Naive thymus-derived CD8-positive, alpha-beta T cell (primary cell): ENCODE measurements at regions of chr3 and their contacts with region 1.

Region 1: DNA sequence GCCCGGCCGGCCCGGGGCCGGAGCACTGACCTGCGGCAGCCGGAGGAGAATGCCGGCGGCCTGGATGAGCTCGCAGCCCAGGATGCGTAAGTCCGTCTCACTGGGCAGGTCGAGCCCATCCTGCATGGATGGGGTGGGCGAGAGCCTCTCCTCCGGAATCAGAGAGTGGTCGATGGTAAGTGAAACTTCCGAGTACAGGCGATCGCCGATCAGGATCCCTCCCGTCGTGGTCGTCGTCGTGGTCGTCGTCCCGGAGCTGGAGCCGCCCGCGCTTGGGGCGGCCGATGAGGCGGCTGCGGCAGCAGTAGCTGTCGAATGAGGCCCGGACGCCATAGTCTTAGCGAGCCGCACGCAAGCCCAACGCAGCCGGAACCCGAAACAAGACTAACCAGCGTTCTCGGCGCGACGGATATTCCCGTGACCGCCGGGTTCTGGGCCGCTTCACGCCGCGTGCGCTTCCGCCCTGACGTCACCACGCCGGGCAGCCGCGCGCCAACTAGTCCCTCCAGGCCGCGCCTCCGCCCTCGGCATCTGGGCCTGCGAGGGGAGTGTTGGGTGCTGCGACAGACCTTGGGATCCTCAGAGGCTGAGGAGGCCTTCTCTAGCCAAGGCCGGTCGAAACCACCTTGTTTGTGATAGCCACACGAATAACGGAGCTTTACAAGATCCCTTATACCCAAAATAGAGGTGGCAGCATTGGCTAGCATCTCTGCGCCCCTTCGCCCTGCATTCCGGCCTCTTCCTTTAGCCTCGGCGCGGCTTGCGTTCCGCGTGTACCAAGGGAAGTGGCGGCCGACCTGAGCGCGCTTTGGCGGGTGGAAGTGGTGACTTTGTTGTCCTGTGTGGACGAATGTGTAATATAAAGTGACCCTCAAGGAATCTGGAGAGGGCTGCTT is at the start of gene CCNL1:
- DNase-seq: peak; percentile 91 to 98 (median 96)
- ATAC-seq: peak; percentile 73 to 75
- H3K4me3 Mint-ChIP-seq: peak within 1 kb of the TSS; percentile 85 to 99 (median 96)
- H3K27ac Mint-ChIP-seq: peak within 1 kb of the TSS; percentile 99 to 100 (median 99)
- H3K4me1 Mint-ChIP-seq: peaks cover 27 to 66% (median 57%) of the 10 kb centered on the region in 4 donors
- H3K27me3 Mint-ChIP-seq: no peaks in the 10 kb centered on the region
- polyA plus RNA-seq, gene CCNL1: 52.9 to 57.0 (median 54.9) TPM

Region 2: DNA sequence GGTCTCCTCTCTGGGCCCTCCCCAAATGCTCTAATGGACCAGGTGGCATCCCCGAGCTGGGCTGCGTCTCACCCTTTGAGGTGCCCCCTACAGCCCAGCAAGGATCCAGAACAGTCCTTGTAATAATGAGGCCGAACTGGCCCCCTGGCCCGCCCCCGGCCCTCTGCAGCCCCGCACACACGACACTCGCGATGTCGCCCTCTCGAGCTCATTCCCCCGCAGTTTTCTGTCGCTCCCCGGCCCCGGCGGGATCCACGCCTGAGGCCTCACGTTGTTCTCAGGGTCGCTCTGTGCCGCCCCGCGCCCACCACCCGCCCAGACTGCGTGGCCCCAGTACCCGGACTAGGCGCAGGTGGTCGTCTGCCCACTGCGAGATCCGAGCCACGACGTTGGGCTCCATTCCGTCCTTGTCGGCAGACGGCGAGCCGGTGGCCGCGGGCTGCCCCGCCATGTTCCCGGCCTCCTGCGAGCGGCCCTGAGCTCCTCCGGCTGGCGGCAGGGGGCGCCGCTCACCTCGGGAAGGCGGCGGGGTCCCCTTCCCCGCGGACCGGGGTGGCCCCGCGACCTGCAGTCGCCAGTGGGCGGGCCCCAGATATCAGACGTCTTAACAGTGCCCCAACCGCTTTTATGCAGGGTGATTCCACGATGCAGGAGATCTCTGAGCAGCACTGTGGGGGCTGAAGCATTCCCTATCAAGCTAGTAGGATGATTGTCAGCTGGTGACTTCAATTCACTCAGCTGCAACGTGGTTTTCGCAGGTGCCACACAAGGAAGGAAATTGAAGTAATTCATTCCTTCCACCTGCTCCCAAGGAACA is 1354.0 kb before region 1 on chr3 and contains the start of gene C3orf33:
- POLR2A ChIA-PET with region 1: interaction called, 10 read pairs
- DNase-seq: peak; percentile 64 to 84 (median 78)
- ATAC-seq: peak; percentile 96 to 97
- H3K4me3 Mint-ChIP-seq: peak within 1 kb of the TSS; percentile 84 to 95 (median 90)
- H3K27ac Mint-ChIP-seq: peak within 1 kb of the TSS; percentile 27 to 93 (median 91)
- H3K4me1 Mint-ChIP-seq: peaks cover 7 to 26% (median 18%) of the 10 kb centered on the region in 4 donors
- H3K27me3 Mint-ChIP-seq: peaks cover 7 to 11% (median 8%) of the 10 kb centered on the region in 5 donors
- polyA plus RNA-seq, gene C3orf33: 3.2 to 5.6 (median 4.4) TPM

Region 3: DNA sequence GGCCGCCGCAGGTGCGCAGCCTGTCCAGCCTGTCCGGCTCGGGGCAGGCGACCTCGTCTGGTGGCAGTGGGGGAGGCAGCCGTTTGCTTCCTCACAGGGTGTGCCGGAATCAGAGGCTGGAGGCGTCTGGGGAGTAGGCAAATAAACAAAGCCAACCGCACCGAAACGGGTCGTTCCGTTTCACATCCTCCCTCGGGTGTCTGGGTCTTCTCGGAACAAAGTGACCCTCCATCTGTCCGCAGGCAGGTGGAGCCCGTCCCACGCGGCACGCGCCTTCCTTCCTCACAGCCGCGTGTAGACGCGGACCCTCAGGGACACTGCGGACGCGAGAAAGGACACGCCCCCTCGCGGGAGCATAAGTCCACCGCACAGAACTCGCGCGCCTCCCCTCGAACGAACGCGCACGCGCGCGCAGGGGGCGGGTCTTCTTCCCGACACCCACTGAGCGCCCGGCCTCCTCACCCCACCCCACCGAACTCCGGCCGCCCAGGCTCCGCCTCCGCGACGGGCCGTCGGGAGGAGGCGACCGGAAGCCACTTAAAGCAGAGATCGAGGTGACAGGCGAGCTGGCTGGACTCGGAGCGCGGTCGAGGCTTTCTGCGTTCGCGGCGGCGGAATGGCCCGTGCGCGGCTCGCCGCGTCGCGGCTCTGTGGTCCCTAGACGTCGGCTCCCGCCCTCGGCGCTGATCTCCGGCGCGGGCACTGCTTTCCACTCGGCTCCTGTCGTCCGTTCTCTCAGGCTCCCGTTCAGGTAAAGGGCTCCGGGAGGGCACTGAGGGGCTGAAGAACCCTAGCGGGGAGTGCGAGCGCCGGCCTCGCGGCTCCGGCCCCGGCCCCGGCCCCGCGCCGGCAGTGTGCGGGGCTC is 485.7 kb before region 1 on chr3 and contains the start of gene TIPARP:
- POLR2A ChIA-PET with region 1: interaction called, 25 read pairs
- DNase-seq: peak; percentile 97 to 99 (median 99)
- ATAC-seq: peak; percentile 76 to 80
- H3K4me3 Mint-ChIP-seq: peak within 1 kb of the TSS; percentile 89 to 99 (median 97)
- H3K27ac Mint-ChIP-seq: peak within 1 kb of the TSS; percentile 92 to 99 (median 99)
- H3K4me1 Mint-ChIP-seq: peaks cover 22 to 47% (median 41%) of the 10 kb centered on the region in 4 donors
- H3K27me3 Mint-ChIP-seq: no peaks in the 10 kb centered on the region
- polyA plus RNA-seq, gene TIPARP: 4.2 to 20.9 (median 7.0) TPM

Region 4: DNA sequence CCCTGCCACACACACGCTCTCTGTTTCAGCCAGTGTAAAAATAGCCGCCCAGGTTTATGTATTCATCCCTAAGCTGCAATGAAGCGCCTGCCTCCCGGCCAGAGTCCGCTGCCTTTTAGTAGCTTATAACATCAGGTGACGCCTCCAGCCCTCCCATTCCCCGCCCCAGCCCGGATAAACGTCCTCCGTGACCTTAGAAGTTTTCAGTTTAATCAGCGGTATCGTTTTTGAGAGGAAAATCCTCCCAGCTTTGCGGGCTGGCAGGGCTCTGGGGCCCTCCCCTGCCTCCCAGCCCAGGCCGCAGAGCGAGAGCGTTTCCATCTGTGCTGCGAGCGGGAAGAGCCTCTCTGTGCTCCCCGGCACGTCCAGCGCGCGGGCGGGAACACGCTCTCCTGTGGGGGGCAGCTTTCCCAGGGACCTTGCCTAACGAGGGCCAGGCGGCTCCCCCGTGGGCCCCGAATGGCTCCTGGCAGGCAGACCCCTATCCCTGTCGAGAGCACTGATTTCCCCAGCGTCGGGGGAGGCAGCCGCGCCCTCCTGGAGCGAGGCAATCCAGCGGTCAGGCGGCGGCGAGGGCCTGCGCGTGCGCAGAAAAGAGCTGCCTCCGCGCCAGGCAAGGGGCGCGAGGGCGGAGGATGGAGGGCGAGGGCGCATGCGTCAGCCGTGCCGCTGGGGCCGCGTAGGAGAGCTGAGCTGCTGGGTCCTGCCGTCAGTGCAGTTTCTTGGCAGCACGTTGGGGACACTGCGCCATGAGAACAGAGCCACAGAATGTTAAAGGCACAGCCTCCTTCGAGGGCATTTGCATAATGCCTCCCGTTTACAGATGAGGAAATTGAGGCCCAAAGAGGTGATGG is 71.2 kb before region 1 on chr3:
- POLR2A ChIA-PET with region 1: interaction called, 40 read pairs
- DNase-seq: peak; percentile 85 to 96 (median 94)
- ATAC-seq: peak; percentile 91 to 96
- H3K4me3 Mint-ChIP-seq: peak overlapping the region; percentile 82 to 92 (median 87)
- H3K27ac Mint-ChIP-seq: peak overlapping the region; percentile 90 to 99 (median 96)
- H3K4me1 Mint-ChIP-seq: peaks cover 18 to 32% (median 20%) of the 10 kb centered on the region in 4 donors
- H3K27me3 Mint-ChIP-seq: peaks cover 0 to 2% (median 0%) of the 10 kb centered on the region in 5 donors

Region 5: GRCh38 chr3:157136647-157137387 is 23.2 kb before region 1 on chr3:
- POLR2A ChIA-PET with region 1: interaction called, 30 read pairs
- DNase-seq: no peak
- ATAC-seq: peak in 1 of 2 donors; percentile 39
- H3K4me3 Mint-ChIP-seq: no peak overlapping the region
- H3K27ac Mint-ChIP-seq: peak overlapping the region in 9 of 10 donors; percentile 13 to 86 (median 76)
- H3K4me1 Mint-ChIP-seq: peaks cover 6 to 35% (median 25%) of the 10 kb centered on the region in 4 donors
- H3K27me3 Mint-ChIP-seq: no peaks in the 10 kb centered on the region

Region 6: DNA sequence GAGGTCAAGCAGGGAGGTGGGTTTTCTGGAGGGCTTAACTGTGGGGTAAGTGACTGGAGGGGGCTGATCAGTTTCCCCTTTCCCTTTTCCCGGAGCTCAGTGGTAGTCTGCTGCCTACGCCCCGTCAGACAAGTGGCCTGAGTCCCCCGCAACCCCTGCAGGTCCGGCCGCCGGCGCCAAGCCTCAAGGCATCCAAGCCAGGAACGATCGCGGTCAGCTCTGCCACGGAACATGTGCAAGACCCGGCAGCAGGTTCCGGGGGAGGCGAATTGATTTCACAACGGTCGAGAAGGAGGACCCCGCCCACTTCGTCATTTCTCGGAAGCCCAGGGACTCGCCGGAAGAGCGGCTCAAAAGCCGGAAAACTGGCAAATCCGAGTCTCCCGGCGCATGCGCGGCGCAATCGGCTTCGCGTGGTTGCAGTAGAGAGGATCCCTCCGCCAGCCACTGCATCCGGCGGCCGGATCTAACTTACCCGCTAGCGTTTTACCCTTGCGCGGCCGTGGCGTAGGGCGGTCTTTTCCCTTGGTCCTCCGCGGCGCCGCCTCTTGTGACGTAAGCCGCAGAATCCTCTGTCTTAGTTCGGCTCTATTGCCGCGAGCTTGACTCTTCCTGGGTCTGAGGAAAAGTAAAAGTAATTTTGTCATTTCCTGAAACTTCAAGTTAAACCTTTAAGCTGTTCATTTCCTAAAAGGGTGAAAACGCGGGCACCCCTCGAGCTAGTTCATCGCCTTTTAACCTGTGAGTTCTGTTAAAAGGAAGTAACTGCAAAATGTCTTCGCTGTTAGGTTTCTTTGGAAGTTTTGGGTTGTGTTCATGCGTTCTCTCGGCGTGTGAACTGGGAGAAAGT is 14.9 kb after region 1 on chr3:
- POLR2A ChIA-PET with region 1: interaction called, 503 read pairs
- DNase-seq: peak; percentile 91 to 99 (median 98)
- ATAC-seq: peak; percentile 91 to 93
- H3K4me3 Mint-ChIP-seq: peak overlapping the region; percentile 81 to 98 (median 94)
- H3K27ac Mint-ChIP-seq: peak overlapping the region; percentile 95 to 99 (median 98)
- H3K4me1 Mint-ChIP-seq: peaks cover 12 to 44% (median 33%) of the 10 kb centered on the region in 4 donors
- H3K27me3 Mint-ChIP-seq: peaks cover 0 to 3% (median 0%) of the 10 kb centered on the region in 5 donors